ENCODE measurements at regions of chr15 and their contacts with region 1.

Region 1: GRCh38 chr15:90660195-90660998 is 56.7 kb upstream of the BLM start:
- DNase-seq: peak; percentile 85
- H3K4me3 Mint-ChIP-seq: peak overlapping the region; percentile 67
- H3K27ac Mint-ChIP-seq: peak overlapping the region; percentile 83
- H3K4me1 Mint-ChIP-seq: peaks cover 84% of the 10 kb centered on the region
- H3K27me3 Mint-ChIP-seq: peaks cover 29% of the 10 kb centered on the region

Region 2: GRCh38 chr15:90686435-90687218 is 26.2 kb after region 1 on chr15:
- CTCF ChIA-PET with region 1: no interaction called
- POLR2A ChIA-PET with region 1: interaction called, 57 read pairs
- DNase-seq: peak; percentile 56
- H3K4me3 Mint-ChIP-seq: peak overlapping the region; percentile 15
- H3K27ac Mint-ChIP-seq: peak overlapping the region; percentile 100
- H3K4me1 Mint-ChIP-seq: peaks cover 54% of the 10 kb centered on the region
- H3K27me3 Mint-ChIP-seq: no peaks in the 10 kb centered on the region

Measured in activated CD4-positive, alpha-beta memory T cell treated with anti-CD3 and anti-CD28 coated beads, Interleukin-2, amount 10 ng/mL, durations not matched to agents 7 days and 5 days (primary cell).